ENCODE measurements at regions of chr6 and their contacts with region 1.

Region 1: GRCh38 chr6:134161036-134161435 is 108.6 kb upstream of the SLC2A12 start:
- H3K4me3 Mint-ChIP-seq: no peak overlapping the region
- H3K27ac Mint-ChIP-seq: no peak overlapping the region
- H3K4me1 Mint-ChIP-seq: no peaks in the 10 kb centered on the region
- H3K27me3 Mint-ChIP-seq: peaks cover 12% of the 10 kb centered on the region

Region 2: DNA sequence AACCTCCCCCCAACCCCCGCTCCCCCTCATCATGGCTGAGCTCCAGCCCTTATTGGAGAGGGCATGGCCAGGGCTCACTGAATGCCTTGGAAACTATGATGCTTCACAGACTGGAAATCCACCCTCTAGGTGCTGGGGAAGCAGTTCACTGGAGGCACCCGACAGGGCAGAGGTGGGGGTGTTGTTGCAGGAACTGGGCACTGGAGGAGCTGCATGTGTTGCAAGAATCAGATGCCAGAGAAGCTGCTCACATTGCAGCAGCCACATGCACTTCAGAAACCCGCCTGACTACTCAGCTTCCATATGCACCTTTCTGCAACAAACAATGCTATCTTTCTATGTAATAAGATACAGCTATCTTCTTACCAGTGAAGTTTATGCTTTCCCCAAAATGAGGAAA is 215.9 kb before region 1 on chr6:
- intact Hi-C with region 1: no loop called
- H3K4me3 Mint-ChIP-seq: no peak overlapping the region
- H3K27ac Mint-ChIP-seq: no peak overlapping the region
- H3K4me1 Mint-ChIP-seq: no peaks in the 10 kb centered on the region
- H3K27me3 Mint-ChIP-seq: peaks cover 9% of the 10 kb centered on the region

Region 3: GRCh38 chr6:134822920-134823709 is 662.1 kb after region 1 on chr6:
- intact Hi-C with region 1: loop called (anchors 1 kb)
- H3K4me3 Mint-ChIP-seq: peak overlapping the region; percentile 25
- H3K27ac Mint-ChIP-seq: peak overlapping the region; percentile 61
- H3K4me1 Mint-ChIP-seq: peaks cover 20% of the 10 kb centered on the region
- H3K27me3 Mint-ChIP-seq: peaks cover 2% of the 10 kb centered on the region

Region 4: GRCh38 chr6:135002229-135002844 is 841.3 kb after region 1 on chr6:
- intact Hi-C with region 1: loop called (anchors 5 kb)
- H3K4me3 Mint-ChIP-seq: no peak overlapping the region
- H3K27ac Mint-ChIP-seq: no peak overlapping the region
- H3K4me1 Mint-ChIP-seq: no peaks in the 10 kb centered on the region
- H3K27me3 Mint-ChIP-seq: no peaks in the 10 kb centered on the region

Region 5: DNA sequence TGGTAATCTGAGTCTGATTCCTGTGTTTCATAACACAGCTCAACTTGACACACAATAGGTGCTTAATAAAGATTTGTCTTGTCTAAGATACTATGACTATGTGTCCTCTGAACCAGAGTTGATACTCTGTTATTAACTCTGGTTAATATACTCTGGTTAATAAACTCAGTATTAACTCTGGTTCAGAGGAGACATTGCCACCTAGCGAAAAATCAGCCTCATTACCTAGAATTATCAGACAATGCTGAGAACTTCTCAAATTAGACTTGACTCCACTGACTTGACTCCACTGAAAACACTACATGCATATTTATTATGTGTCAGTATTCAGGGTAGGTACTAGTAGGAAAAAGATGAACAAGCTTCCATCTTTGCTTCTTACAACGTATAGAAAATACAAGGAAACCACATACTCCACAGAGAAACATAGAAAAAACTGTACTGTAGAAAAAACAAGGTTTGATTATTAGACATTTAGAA is 1262.7 kb after region 1 on chr6:
- intact Hi-C with region 1: loop called (anchors 5 kb)
- H3K4me3 Mint-ChIP-seq: no peak overlapping the region
- H3K27ac Mint-ChIP-seq: no peak overlapping the region
- H3K4me1 Mint-ChIP-seq: no peaks in the 10 kb centered on the region
- H3K27me3 Mint-ChIP-seq: no peaks in the 10 kb centered on the region